ENCODE measurements at regions of chr11 and their contacts with region 1.

Region 1: DNA sequence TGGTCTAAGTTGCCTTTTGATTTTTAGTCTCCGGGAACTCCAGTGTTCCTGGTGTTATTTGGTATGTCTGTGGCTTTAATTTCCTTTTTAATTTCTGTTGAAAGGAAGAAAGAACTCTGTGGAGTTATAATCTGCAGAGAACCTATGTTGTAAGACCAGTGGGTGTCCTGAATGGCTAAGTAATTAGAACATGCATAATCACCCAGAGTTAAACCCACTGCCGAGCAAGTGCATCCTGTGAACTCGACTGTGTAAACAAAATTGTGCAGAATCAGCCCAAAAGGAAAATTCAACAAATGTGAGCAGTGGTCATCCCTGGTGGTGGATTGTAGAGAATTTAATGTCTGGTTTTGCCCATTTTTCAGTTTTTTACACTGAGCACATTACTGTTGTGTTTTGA is 162.5 kb downstream of the COMMD9 start:
- DNase-seq: peak; percentile 56
- H3K4me3 ChIP-seq: no peak overlapping the region
- H3K27ac ChIP-seq: no peak overlapping the region
- H3K4me1 ChIP-seq: peaks cover 8% of the 10 kb centered on the region
- H3K27me3 ChIP-seq: no peaks in the 10 kb centered on the region
- CTCF ChIP-seq: no peak

Region 2: DNA sequence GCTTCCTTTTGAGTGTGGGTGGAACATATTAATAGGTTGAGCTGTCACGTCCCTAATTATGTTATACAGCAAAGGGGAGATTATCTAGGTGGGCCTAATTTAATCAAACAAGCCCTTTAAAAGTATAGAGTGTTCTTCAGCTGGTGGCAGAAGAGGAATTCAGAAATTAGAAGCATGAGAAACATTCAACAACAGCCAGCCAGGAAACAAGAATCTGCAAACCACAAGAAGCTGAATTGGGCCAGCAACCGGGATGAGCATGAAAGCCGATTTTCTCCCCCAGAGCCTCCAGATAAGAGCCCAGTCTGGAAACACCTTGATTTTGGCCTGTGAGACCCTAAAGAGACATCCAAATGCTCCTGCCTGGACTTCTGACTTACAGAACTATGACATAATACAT is 288.6 kb before region 1 on chr11:
- CTCF ChIA-PET with region 1: no interaction called
- POLR2A ChIA-PET with region 1: no interaction called
- intact Hi-C with region 1: loop called (anchors 5 kb)
- DNase-seq: no peak
- H3K4me3 ChIP-seq: no peak overlapping the region
- H3K27ac ChIP-seq: no peak overlapping the region
- H3K4me1 ChIP-seq: peaks cover 6% of the 10 kb centered on the region
- H3K27me3 ChIP-seq: no peaks in the 10 kb centered on the region
- CTCF ChIP-seq: no peak

Region 3: GRCh38 chr11:36023922-36024321 is 102.8 kb before region 1 on chr11:
- CTCF ChIA-PET with region 1: no interaction called
- POLR2A ChIA-PET with region 1: no interaction called
- intact Hi-C with region 1: no loop called
- DNase-seq: no peak
- H3K4me3 ChIP-seq: no peak overlapping the region
- H3K27ac ChIP-seq: no peak overlapping the region
- H3K4me1 ChIP-seq: no peaks in the 10 kb centered on the region
- H3K27me3 ChIP-seq: no peaks in the 10 kb centered on the region
- CTCF ChIP-seq: no peak

Region 4: DNA sequence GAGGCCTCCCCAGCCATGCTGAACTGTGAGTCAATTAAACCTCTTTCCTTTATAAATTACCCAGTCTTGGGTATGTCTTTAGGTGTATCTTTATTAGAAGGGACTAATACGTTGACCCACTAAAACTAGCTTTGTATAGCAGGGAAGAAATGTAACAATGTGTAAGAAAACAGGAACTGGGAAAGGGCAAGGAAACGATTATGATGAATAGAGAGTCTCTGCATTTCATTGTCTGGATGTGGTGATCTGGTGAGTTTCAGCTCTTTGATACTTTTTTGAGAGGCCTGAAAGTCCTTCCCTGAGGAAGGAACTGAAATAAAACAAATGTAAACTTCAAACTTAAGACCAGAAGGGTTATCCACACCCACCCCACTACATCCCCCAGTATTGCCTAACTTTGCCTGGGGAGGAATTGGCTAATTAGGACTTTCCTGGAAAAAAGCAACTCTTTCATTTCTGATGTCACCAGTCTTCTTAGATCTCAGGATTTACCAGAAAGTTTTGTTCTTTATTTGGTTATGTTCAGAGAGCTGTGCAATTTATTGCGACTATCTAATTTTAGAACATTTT is 63.8 kb before region 1 on chr11:
- CTCF ChIA-PET with region 1: no interaction called
- POLR2A ChIA-PET with region 1: no interaction called
- intact Hi-C with region 1: no loop called
- DNase-seq: no peak
- H3K4me3 ChIP-seq: no peak overlapping the region
- H3K27ac ChIP-seq: no peak overlapping the region
- H3K4me1 ChIP-seq: no peaks in the 10 kb centered on the region
- H3K27me3 ChIP-seq: no peaks in the 10 kb centered on the region
- CTCF ChIP-seq: no peak